Endothelial cell of umbilical vein (primary cell): ENCODE measurements at regions of chr1 and their contacts with region 1.

Region 1: GRCh38 chr1:244835276-244836134 is at the start of gene COX20:
- DNase-seq: peak; percentile 91
- H3K4me3 ChIP-seq: peak within 1 kb of the TSS; percentile 36 to 85 (median 80)
- H3K27ac ChIP-seq: peak within 1 kb of the TSS; percentile 85
- H3K4me1 ChIP-seq: peaks cover 23% of the 10 kb centered on the region
- H3K27me3 ChIP-seq: no peaks in the 10 kb centered on the region
- CTCF ChIP-seq: no peak
- POLR2A ChIP-seq: peak; percentile 68
- total RNA-seq, gene COX20: 30.2 and 37.0 TPM in 2 replicates

Region 2: GRCh38 chr1:244599937-244600350 is 235.6 kb before region 1 on chr1:
- CTCF ChIA-PET with region 1: interaction called, 3 read pairs
- POLR2A ChIA-PET with region 1: no interaction called
- dilution Hi-C with region 1: no loop called
- intact Hi-C with region 1: loop called (anchors 1 kb)
- DNase-seq: peak; percentile 96
- H3K4me3 ChIP-seq: peak overlapping the region in 2 of 3 experiments; percentile 12 to 63
- H3K27ac ChIP-seq: peak overlapping the region; percentile 92
- H3K4me1 ChIP-seq: peaks cover 15% of the 10 kb centered on the region
- H3K27me3 ChIP-seq: peaks cover 0 to 2% of the 10 kb centered on the region in 2 experiments
- CTCF ChIP-seq: no peak
- POLR2A ChIP-seq: no peak

Region 3: DNA sequence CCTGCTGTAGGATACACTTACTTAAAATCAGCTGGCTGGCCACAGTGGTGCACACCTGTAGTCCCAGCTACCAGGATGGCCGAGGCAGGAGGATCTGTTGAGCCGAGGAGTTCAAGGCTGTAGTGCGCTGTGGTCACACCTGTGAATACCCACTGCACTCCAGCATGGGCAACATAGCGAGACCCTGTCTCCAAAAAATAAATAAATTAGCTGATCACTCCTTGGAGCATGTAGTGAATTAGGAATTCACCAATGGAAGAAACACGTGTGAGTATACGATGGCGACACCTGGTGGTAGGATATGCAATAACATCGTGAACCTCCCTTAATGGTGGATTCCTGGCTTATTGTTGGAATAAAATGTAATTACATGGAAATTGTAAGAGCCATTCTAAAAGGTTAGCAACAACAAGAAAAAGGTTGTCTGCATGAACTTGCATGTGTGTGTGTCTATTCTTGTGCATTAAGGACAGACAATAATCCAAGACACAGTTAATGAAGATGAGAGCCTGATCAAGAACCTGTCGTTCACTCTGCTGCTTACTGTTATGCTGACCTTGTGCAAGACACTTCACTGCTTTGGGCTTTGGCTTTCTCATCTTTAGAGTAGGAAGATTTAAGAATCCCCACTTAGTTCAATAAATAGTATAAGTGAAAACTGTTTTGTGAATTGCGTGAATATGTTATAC is 38.6 kb before region 1 on chr1:
- CTCF ChIA-PET with region 1: interaction called, 19 read pairs
- POLR2A ChIA-PET with region 1: no interaction called
- dilution Hi-C with region 1: no loop called
- intact Hi-C with region 1: loop called (anchors 1 kb)
- DNase-seq: peak; percentile 70
- H3K4me3 ChIP-seq: no peak overlapping the region
- H3K27ac ChIP-seq: no peak overlapping the region
- H3K4me1 ChIP-seq: no peaks in the 10 kb centered on the region
- H3K27me3 ChIP-seq: no peaks in the 10 kb centered on the region
- CTCF ChIP-seq: peak; percentile 63 to 69
- POLR2A ChIP-seq: no peak

Region 4: DNA sequence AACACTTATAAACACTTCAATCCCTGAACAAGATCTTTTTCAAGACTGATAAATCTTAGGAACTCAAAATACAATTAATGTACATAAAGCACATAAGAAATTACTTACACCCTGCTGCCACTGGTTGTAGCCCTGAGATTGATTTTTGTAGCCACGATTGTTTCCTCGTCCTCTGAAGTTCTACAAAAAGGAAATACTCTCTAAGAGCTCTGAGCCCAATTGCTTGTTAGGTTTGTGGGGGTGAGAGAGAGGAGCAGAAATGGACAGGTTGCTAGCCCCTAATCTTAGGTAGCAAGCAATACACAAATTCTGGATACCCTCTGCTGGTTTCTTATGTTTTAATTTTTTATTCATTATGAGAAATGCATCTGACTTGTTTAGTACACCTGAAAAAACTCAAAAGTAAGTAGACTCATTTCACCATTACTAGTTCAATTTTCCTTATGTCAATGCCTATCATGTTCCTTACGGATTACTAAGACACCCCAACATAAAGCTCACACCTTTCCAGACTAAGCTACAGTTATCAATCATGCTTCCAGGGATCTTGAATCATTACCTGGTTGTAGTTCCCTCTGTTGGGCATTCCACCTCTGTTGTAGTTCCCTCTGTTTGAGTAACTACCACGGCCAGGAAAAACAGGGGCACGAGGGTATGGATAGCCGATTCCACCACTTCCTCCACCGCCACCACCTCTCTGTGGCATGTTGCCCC is 19.5 kb after region 1 on chr1:
- CTCF ChIA-PET with region 1: interaction called, 10 read pairs
- POLR2A ChIA-PET with region 1: interaction called, 4 read pairs
- dilution Hi-C with region 1: no loop called
- intact Hi-C with region 1: no loop called
- DNase-seq: no peak
- H3K4me3 ChIP-seq: no peak overlapping the region
- H3K27ac ChIP-seq: no peak overlapping the region
- H3K4me1 ChIP-seq: peaks cover 6% of the 10 kb centered on the region
- H3K27me3 ChIP-seq: no peaks in the 10 kb centered on the region
- CTCF ChIP-seq: no peak
- POLR2A ChIP-seq: no peak

Region 5: DNA sequence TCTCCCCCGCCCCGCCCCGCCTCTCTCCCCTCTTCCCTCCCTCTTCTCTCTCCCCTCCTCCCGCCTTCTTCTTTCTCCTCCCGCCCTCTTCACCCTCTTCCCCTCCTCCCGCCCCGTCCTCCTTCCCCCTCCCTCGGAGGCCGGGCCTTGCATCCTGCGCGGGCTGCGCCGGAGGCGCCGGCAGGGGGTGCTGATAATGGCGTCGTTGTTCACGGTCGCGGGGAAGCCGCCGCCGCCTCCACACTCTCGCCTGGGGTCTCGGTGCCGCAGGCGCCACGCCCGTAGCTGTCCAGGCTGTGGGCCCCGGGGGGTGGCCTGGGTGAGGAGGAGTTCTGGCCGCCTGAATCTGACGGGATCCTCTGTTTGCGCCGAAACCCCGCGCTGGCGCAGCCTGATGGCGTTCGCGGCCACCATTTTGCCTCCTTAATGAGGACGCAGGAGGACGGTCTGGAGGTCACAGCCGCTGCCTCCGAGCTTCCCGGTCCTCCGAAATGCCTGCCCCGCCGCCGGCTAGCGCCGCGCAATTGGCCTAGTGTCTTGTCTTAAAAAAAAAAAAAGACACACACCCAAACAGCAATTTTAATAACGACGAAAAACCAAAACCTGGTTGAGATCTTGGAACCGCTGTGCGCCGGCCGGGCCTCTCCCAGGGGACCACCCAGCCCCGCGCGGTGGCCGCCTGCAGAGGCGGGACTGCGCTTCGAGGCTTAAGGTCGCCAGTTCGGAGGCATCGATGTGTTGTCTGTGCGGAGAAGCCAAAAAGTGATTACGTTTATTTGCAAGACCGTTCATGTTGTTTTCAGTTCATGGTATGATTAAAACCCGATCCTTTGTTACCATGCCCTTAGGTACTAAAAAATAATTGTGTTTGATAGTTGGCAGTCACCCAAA is 135.4 kb after region 1 on chr1:
- CTCF ChIA-PET with region 1: interaction called, 3 read pairs
- POLR2A ChIA-PET with region 1: interaction called, 9 read pairs
- dilution Hi-C with region 1: no loop called
- intact Hi-C with region 1: loop called (anchors 1 kb)
- DNase-seq: peak; percentile 94
- H3K4me3 ChIP-seq: peak overlapping the region; percentile 37 to 86 (median 80)
- H3K27ac ChIP-seq: peak overlapping the region; percentile 96
- H3K4me1 ChIP-seq: peaks cover 15% of the 10 kb centered on the region
- H3K27me3 ChIP-seq: no peaks in the 10 kb centered on the region
- CTCF ChIP-seq: peak; percentile 47 to 77
- POLR2A ChIP-seq: peak; percentile 86